ENCODE measurements at regions of chr1 and their contacts with region 1.

Region 1: DNA sequence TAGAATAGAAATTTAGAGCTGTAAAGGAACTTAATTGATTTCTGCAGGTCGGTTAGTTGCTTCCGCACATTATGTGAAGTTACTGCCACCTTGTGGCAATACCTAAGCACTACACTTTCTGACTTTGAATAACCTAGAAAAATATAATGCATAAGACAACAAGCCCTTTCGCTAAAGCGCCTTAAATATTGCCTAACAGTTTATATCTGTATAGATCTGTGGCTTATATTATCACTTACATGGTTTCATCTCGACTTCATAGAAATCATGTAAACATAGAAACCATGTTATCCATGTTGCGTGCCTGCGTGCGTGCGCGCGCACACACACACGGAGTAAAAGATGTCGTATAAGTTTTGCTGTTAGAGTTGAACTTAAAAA is 10.9 kb upstream of the IFI16 start:
- DNase-seq: peak; percentile 80
- ATAC-seq: peak; percentile 29
- H3K4me3 ChIP-seq: peak overlapping the region; percentile 61
- H3K27ac ChIP-seq: no peak overlapping the region
- H3K4me1 ChIP-seq: peaks cover 14% of the 10 kb centered on the region
- H3K27me3 ChIP-seq: no peaks in the 10 kb centered on the region
- CTCF ChIP-seq: peak; percentile 98

Region 2: GRCh38 chr1:158246650-158247049 is 752.1 kb before region 1 on chr1:
- CTCF ChIA-PET with region 1: interaction called, 3 read pairs
- POLR2A ChIA-PET with region 1: no interaction called
- intact Hi-C with region 1: loop called (anchors 1 kb)
- DNase-seq: peak; percentile 44
- ATAC-seq: peak; percentile 40; the same call in 1 of the 2 replicates
- H3K4me3 ChIP-seq: no peak overlapping the region
- H3K27ac ChIP-seq: no peak overlapping the region
- H3K4me1 ChIP-seq: no peaks in the 10 kb centered on the region
- H3K27me3 ChIP-seq: peaks cover 40% of the 10 kb centered on the region
- CTCF ChIP-seq: peak; percentile 47

Region 3: GRCh38 chr1:158793604-158794003 is 205.2 kb before region 1 on chr1:
- CTCF ChIA-PET with region 1: no interaction called
- POLR2A ChIA-PET with region 1: no interaction called
- intact Hi-C with region 1: loop called (anchors 1 kb)
- DNase-seq: no peak
- ATAC-seq: no peak
- H3K4me3 ChIP-seq: no peak overlapping the region
- H3K27ac ChIP-seq: no peak overlapping the region
- H3K4me1 ChIP-seq: no peaks in the 10 kb centered on the region
- H3K27me3 ChIP-seq: no peaks in the 10 kb centered on the region; the same call in 1 of the 2 replicates
- CTCF ChIP-seq: no peak; the same call in 1 of the 2 replicates

Region 4: DNA sequence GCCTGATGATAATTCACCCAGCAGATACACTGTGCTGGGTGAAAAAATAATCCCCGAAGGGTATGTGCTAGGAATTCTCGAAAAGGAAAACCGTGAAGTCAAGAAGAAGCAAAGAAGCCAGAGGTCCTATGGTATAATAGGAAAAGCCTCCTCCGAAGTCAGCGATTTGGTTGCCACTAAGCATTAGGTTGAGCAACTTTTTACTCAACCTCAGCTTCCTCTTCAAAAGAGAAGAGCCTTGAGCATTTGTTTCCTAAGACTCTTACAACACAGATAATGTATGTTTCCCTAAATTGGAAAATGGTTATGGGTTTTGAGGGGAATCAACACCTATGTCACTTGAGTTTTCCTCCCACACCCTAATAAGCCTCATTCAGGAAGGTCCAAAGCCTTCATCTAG is 188.9 kb before region 1 on chr1:
- CTCF ChIA-PET with region 1: no interaction called
- POLR2A ChIA-PET with region 1: no interaction called
- intact Hi-C with region 1: no loop called
- DNase-seq: no peak
- ATAC-seq: no peak
- H3K4me3 ChIP-seq: no peak overlapping the region
- H3K27ac ChIP-seq: no peak overlapping the region
- H3K4me1 ChIP-seq: no peaks in the 10 kb centered on the region
- H3K27me3 ChIP-seq: peaks cover 16% of the 10 kb centered on the region
- CTCF ChIP-seq: no peak

Region 5: DNA sequence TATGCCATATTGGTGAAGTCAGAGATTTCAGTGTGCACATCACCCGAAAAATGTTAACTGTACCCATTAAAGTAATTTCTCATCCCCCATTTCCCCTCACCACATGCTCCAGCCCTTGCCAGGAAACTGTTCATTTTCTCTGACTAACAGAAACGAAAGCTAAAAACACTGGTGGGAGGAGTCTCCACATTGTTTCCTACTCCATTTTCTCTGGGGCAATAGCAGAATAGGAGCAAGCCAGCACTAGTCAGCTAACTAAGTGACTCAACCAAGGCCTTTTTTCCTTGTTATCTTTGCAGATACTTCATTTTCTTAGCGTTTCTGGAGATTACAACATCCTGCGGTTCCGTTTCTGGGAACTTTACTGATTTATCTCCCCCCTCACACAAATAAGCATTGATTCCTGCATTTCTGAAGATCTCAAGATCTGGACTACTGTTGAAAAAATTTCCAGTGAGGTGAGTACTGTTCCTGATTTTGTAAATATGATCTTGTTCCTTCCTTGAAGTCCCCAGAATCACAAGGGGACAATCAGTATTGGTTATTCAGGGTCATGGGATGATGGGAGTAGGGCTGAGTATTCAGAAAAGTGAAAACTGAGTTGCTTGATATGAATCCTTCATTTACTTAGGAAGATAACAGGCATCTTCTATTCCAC is 11.1 kb after region 1 on chr1 and contains the start of gene IFI16:
- CTCF ChIA-PET with region 1: no interaction called
- POLR2A ChIA-PET with region 1: no interaction called
- intact Hi-C with region 1: loop called (anchors 1 kb)
- DNase-seq: peak; percentile 48
- ATAC-seq: peak; percentile 90
- H3K4me3 ChIP-seq: peak within 1 kb of the TSS; percentile 24
- H3K27ac ChIP-seq: 0 out of 2 replicates have a peak within 1 kb of the TSS, but pooled peaks have one; percentile 4
- H3K4me1 ChIP-seq: 0 out of 2 replicates have a peak, but pooled peaks cover 3% of the 10 kb centered on the region
- H3K27me3 ChIP-seq: peaks cover 11% of the 10 kb centered on the region
- CTCF ChIP-seq: no peak
- total RNA-seq, gene IFI16: 0.98 and 1.3 TPM in 2 replicates

Region 6: DNA sequence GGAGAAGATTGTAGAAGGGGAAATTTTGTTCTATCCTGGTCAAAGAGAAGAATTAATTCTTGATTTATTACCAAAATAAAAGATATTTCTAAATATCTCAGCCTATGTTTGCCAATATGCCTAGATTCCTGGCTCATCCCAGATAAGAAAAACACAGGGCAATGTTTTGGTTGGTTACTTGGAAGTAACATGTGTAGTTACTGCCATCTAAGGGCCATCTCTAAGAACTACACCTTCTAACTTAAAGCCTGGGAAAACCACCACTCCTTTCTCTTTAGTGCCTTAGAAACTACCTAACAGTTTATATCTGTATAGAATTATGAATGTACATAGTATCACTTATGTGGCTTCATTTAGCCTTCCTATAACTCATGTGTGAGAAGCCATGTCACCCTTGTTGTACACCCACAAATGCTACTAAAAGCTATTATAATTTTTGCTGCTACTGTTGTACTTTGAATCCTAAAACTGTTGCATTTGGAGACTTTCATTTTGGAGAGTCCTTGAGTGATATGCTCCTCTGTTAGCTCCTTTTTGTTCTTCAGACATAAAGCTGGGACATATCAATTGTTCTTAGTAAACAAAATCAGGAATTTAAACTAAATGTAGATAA is 73.3 kb after region 1 on chr1:
- CTCF ChIA-PET with region 1: interaction called, 8 read pairs
- POLR2A ChIA-PET with region 1: no interaction called
- intact Hi-C with region 1: loop called (anchors 1 kb)
- DNase-seq: peak; percentile 77
- ATAC-seq: peak; percentile 82
- H3K4me3 ChIP-seq: no peak overlapping the region
- H3K27ac ChIP-seq: no peak overlapping the region
- H3K4me1 ChIP-seq: peaks cover 6% of the 10 kb centered on the region
- H3K27me3 ChIP-seq: peaks cover 20% of the 10 kb centered on the region
- CTCF ChIP-seq: peak; percentile 82

Region 7: DNA sequence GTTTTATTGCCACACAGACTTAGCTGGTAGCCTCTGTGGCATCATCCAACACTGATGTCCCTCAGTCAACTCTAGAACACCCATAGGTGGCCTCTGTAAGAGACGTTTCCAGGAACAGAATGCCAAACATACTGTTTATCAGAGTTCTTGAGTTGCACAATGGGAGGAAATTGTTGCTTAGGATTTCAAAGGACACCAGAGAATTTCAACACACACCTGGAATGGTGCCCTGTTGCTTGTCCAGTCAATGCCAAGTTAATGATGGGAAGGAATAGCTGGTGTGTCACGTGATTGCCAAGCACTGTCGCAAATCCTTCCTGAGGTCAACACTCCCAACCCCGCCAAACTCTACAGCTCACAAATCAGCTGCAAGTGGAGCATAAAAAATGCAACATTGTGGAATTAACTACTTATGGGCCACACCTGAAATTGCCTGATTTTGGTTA is 753.4 kb after region 1 on chr1:
- CTCF ChIA-PET with region 1: no interaction called
- POLR2A ChIA-PET with region 1: no interaction called
- intact Hi-C with region 1: no loop called
- DNase-seq: no peak
- ATAC-seq: no peak
- H3K4me3 ChIP-seq: no peak overlapping the region
- H3K27ac ChIP-seq: no peak overlapping the region
- H3K4me1 ChIP-seq: no peaks in the 10 kb centered on the region
- H3K27me3 ChIP-seq: peaks cover 73% of the 10 kb centered on the region
- CTCF ChIP-seq: no peak

Measured in PC-3 (cell line).